ENCODE measurements at regions of chr20 and their contacts with region 1.

Region 1: DNA sequence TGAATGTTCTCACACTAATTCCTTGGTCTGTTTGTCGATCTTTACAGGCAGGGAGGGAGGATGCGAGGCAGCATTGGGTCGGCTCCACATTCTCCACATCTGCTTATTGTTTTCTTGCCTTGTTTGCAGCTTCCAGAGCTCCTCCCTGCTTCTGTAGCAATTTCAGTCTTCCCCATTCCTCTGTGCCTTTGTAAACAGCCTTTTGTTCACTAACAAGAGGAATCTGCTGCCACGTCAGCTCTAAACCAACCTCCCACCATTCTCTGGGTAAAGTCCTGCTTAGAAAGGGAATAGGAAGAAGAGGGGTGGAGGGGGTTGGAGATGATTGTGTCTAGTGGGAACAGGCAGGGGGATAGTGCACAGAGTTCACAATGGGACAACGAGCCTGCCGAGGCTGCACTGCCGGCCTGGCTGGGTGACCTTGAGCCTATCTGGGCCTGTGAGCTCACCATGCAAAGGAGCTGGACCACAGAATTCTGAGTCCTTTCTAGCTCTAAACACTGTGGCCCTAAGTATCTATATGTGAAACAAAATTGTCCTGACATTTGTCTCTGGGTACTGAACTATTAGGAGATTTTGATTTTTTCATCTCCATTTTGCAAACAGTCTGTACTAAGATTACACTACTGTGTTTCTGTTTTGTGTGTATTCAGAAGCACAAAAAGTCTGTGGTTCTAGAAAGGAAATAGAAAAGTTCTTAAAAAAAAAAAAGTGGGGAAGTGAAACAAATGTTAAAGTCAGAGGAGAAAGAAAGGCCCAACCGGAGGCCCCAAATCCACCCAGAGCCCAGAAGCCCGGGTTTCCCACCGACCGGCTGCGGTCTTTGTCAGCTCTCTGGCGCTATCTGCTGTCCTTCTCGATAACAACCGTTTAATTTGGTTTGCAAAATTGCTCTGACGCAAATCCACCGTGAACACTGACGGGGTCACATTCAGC is 1.4 kb upstream of the PRND start:
- DNase-seq: peak; percentile 49 to 84 (median 77)
- ATAC-seq: peak; percentile 96
- H3K4me3 ChIP-seq: no peak overlapping the region
- H3K4me3 Mint-ChIP-seq: peak overlapping the region in 3 of 10 donors; percentile 4 to 41 (median 30)
- H3K27ac ChIP-seq: no peak overlapping the region
- H3K27ac Mint-ChIP-seq: peak overlapping the region in 8 of 9 donors; percentile 23 to 87 (median 69)
- H3K4me1 ChIP-seq: peaks cover 0 to 7% of the 10 kb centered on the region in 2 donors
- H3K4me1 Mint-ChIP-seq: peaks cover 0 to 16% (median 12%) of the 10 kb centered on the region in 7 donors
- H3K27me3 ChIP-seq: no peaks in the 10 kb centered on the region
- H3K27me3 Mint-ChIP-seq: peaks cover 0 to 16% (median 0%) of the 10 kb centered on the region in 5 donors

Region 2: DNA sequence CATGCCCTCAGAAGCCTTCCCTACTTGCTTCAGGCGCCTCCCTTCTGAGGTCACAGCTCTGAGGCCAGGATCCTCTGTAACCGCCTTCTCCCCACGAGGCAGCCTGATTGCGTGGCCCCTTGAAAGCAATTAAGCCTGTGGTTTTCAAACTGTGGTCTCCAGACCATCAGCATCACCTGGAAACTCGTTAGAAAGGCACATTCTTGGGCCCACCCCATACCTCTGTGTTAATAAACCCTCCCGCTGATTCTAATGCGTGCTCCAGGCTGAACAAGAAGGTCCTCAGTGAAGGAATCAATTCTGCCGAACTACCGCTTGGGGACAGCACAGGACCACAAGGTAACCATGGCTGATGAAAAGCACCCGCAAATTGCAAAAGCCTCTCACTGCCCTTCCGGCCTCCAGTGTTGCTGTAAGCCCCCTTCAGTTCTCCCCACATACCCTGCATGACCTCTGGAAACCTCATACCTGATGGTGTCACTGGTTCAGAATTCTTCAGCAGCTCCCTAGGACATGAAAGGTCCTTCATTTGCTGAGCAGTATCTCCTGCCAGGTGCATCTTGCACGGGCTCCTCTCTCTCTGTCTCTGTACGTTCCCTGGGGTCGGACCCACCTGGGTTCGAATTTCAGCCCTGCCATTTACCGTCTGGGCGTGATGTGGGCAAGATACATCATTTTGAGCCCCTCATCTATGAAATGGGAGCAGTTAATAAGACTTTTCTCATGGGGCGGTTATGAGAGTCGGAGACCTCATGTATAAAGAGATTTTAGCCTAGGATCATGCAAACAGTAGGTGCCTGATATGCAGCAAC is 611.6 kb before region 1 on chr20:
- CTCF ChIA-PET with region 1: no interaction called
- POLR2A ChIA-PET with region 1: no interaction called
- intact Hi-C with region 1: loop called in 1 of 2 experiments (anchors 1 kb)
- DNase-seq: peak; percentile 26 to 66 (median 53)
- ATAC-seq: peak; percentile 91
- H3K4me3 ChIP-seq: no peak overlapping the region
- H3K4me3 Mint-ChIP-seq: peak overlapping the region in 1 of 10 donors; percentile 30
- H3K27ac ChIP-seq: no peak overlapping the region
- H3K27ac Mint-ChIP-seq: peak overlapping the region in 1 of 9 donors; percentile 55
- H3K4me1 ChIP-seq: no peaks in the 10 kb centered on the region
- H3K4me1 Mint-ChIP-seq: peaks cover 0 to 37% (median 5%) of the 10 kb centered on the region in 7 donors
- H3K27me3 ChIP-seq: no peaks in the 10 kb centered on the region
- H3K27me3 Mint-ChIP-seq: peaks cover 0 to 12% (median 0%) of the 10 kb centered on the region in 5 donors

Region 3: DNA sequence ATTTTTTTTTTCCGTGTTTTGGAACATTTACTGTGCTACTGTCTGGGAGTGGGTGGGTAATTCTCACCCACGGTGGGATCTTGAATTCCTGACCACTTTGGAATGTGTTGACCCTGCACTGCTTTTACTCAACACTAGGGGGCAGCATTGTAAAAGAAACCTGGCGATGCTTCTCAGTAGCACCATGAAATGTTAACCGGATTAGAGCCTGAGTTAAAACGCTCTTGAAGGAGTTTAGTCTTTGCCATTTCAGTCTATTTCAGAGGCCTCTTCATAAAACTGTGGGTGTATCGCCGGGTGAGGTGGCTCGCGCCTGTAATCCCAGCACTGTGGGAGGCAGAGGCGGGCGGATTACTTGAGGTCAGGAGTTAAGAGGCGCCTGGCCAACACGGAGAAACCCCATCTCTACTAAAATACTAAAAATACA is 113.0 kb before region 1 on chr20:
- CTCF ChIA-PET with region 1: interaction called, 58 read pairs
- POLR2A ChIA-PET with region 1: no interaction called
- intact Hi-C with region 1: loop called (anchors 1 kb)
- DNase-seq: peak in 8 of 9 donors; percentile 43 to 75 (median 68)
- ATAC-seq: peak; percentile 93
- H3K4me3 ChIP-seq: no peak overlapping the region
- H3K4me3 Mint-ChIP-seq: no peak overlapping the region
- H3K27ac ChIP-seq: no peak overlapping the region
- H3K27ac Mint-ChIP-seq: no peak overlapping the region
- H3K4me1 ChIP-seq: no peaks in the 10 kb centered on the region
- H3K4me1 Mint-ChIP-seq: peaks cover 0 to 8% (median 0%) of the 10 kb centered on the region in 7 donors
- H3K27me3 ChIP-seq: no peaks in the 10 kb centered on the region
- H3K27me3 Mint-ChIP-seq: peaks cover 17 to 31% (median 20%) of the 10 kb centered on the region in 5 donors

Region 4: DNA sequence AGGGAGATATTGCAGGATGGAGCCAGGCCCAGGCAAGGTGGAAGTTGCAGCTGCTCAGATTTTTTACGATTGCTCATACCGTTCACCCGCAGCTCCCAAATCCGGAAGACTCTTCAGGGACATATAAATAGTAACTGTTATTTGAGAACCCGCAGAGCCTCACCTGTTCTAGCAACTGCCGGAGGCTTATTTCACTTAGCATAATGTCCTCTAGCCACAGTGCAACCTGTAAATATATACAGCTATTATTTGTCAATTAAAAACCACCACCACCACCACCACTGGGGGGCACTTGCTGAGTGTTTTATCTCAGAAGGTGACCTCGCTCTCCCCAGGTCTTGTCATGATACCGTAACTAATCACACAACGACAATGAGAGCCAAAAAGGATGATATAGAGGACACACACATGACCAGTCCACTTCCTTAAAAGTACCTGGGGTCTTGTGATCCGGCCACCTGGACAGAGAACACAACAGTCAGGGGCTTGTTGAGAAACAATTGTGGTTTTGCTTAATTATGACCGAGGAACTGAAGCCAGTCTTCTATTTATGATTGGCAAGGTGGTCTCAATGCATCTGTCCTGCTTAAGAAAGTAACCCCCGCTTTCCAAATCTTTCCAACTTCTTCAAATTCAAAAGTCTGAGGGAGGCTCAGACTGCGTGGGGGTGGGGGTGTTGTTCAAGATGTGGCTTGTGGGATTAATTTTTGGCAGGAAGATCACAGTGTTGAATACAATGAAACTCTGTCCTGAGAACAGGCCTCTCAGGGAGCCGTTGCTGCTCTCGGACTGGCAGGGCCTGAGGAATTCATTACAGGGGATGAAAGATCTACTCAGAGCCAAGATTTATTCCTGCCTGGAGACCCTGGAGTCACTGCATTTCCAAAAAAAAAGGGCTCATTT is 106.3 kb before region 1 on chr20:
- CTCF ChIA-PET with region 1: interaction called, 35 read pairs
- POLR2A ChIA-PET with region 1: interaction called, 3 read pairs
- intact Hi-C with region 1: loop called (anchors 1 kb)
- DNase-seq: peak; percentile 20 to 41 (median 31)
- ATAC-seq: peak; percentile 86
- H3K4me3 ChIP-seq: no peak overlapping the region
- H3K4me3 Mint-ChIP-seq: no peak overlapping the region
- H3K27ac ChIP-seq: no peak overlapping the region
- H3K27ac Mint-ChIP-seq: peak overlapping the region in 1 of 9 donors; percentile 12
- H3K4me1 ChIP-seq: peaks cover 0 to 3% of the 10 kb centered on the region in 2 donors
- H3K4me1 Mint-ChIP-seq: peaks cover 0 to 6% (median 0%) of the 10 kb centered on the region in 7 donors
- H3K27me3 ChIP-seq: no peaks in the 10 kb centered on the region
- H3K27me3 Mint-ChIP-seq: peaks cover 0 to 15% (median 6%) of the 10 kb centered on the region in 5 donors

Region 5: DNA sequence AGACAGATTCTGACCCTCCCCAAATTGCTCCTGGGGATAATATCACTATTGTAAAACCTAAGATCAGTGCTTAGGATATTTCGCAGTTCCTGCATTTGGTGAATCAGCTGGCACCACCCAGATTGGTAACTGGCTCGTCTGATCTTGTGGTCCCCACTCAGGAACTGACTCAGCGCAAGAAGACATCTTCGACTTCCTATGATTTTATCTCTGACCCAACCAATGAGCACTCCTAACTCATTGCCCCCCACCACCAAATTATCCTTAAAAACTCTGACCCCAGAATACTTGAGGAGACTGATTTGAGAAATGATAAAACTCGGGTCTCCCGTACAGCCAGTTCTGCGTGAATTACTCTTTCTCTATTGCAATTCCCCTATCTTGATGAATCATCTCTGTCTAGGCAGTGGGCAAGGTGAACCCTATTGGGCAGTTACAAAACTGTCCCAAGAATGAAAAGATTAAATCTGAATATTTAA is 54.3 kb before region 1 on chr20:
- CTCF ChIA-PET with region 1: no interaction called
- POLR2A ChIA-PET with region 1: no interaction called
- intact Hi-C with region 1: loop called in 1 of 2 experiments (anchors 2 kb)
- DNase-seq: peak in 2 of 9 donors; percentile 17 to 40
- ATAC-seq: peak; percentile 86
- H3K4me3 ChIP-seq: peak overlapping the region; percentile 46
- H3K4me3 Mint-ChIP-seq: peak overlapping the region in 9 of 10 donors; percentile 4 to 81 (median 43)
- H3K27ac ChIP-seq: no peak overlapping the region
- H3K27ac Mint-ChIP-seq: peak overlapping the region in 5 of 9 donors; percentile 21 to 87 (median 29)
- H3K4me1 ChIP-seq: peaks cover 10 to 17% of the 10 kb centered on the region in 2 donors
- H3K4me1 Mint-ChIP-seq: peaks cover 4 to 44% (median 13%) of the 10 kb centered on the region in 7 donors
- H3K27me3 ChIP-seq: no peaks in the 10 kb centered on the region
- H3K27me3 Mint-ChIP-seq: peaks cover 0 to 12% (median 0%) of the 10 kb centered on the region in 5 donors

Region 6: GRCh38 chr20:4699216-4699615 is 21.1 kb before region 1 on chr20:
- CTCF ChIA-PET with region 1: no interaction called
- POLR2A ChIA-PET with region 1: no interaction called
- intact Hi-C with region 1: no loop called
- DNase-seq: no peak
- ATAC-seq: no peak
- H3K4me3 ChIP-seq: no peak overlapping the region
- H3K4me3 Mint-ChIP-seq: no peak overlapping the region
- H3K27ac ChIP-seq: no peak overlapping the region
- H3K27ac Mint-ChIP-seq: peak overlapping the region in 1 of 9 donors; percentile 19
- H3K4me1 ChIP-seq: peaks cover 0 to 6% of the 10 kb centered on the region in 2 donors
- H3K4me1 Mint-ChIP-seq: peaks cover 8 to 33% (median 23%) of the 10 kb centered on the region in 7 donors
- H3K27me3 ChIP-seq: no peaks in the 10 kb centered on the region
- H3K27me3 Mint-ChIP-seq: no peaks in the 10 kb centered on the region

Region 7: GRCh38 chr20:4956200-4956810 is 236.0 kb after region 1 on chr20:
- CTCF ChIA-PET with region 1: no interaction called
- POLR2A ChIA-PET with region 1: no interaction called
- intact Hi-C with region 1: no loop called
- DNase-seq: peak in 7 of 9 donors; percentile 37 to 67 (median 55)
- ATAC-seq: peak; percentile 86
- H3K4me3 ChIP-seq: no peak overlapping the region
- H3K4me3 Mint-ChIP-seq: no peak overlapping the region
- H3K27ac ChIP-seq: no peak overlapping the region
- H3K27ac Mint-ChIP-seq: peak overlapping the region in 1 of 9 donors; percentile 4
- H3K4me1 ChIP-seq: peaks cover 1 to 2% of the 10 kb centered on the region in 2 donors
- H3K4me1 Mint-ChIP-seq: peaks cover under 1 to 19% (median 14%) of the 10 kb centered on the region in 7 donors
- H3K27me3 ChIP-seq: no peaks in the 10 kb centered on the region
- H3K27me3 Mint-ChIP-seq: no peaks in the 10 kb centered on the region